Gastrocnemius medialis (tissue), 4 donors: ENCODE measurements at regions of chr1 and their contacts with region 1.

Region 1: GRCh38 chr1:47725992-47726855 is 271.0 kb downstream of the TRABD2B start:
- DNase-seq: peak; percentile 34 to 58
- ATAC-seq: peak; percentile 93 to 94
- H3K4me3 ChIP-seq: peak overlapping the region in 2 of 4 donors; percentile 8 to 11
- H3K27ac ChIP-seq: no peak overlapping the region
- H3K4me1 ChIP-seq: peaks cover 0 to 7% of the 10 kb centered on the region in 2 donors
- H3K27me3 ChIP-seq: peaks cover 16 to 23% (median 20%) of the 10 kb centered on the region in 3 donors
- CTCF ChIP-seq: peak; percentile 64 to 88 (median 76)
- POLR2A ChIP-seq: no peak

Region 2: GRCh38 chr1:47388891-47389238 is 337.4 kb before region 1 on chr1:
- in situ Hi-C with region 1: no loop called
- intact Hi-C with region 1: loop called (anchors 5 kb)
- DNase-seq: peak; percentile 5 to 29
- ATAC-seq: peak; percentile 27 to 64
- H3K4me3 ChIP-seq: no peak overlapping the region
- H3K27ac ChIP-seq: no peak overlapping the region
- H3K4me1 ChIP-seq: peaks cover 0 to 4% of the 10 kb centered on the region in 2 donors
- H3K27me3 ChIP-seq: peaks cover 0 to 14% (median 9%) of the 10 kb centered on the region in 3 donors
- CTCF ChIP-seq: peak in 3 of 5 experiments; percentile 50 to 67 (median 60)
- POLR2A ChIP-seq: no peak

Region 3: DNA sequence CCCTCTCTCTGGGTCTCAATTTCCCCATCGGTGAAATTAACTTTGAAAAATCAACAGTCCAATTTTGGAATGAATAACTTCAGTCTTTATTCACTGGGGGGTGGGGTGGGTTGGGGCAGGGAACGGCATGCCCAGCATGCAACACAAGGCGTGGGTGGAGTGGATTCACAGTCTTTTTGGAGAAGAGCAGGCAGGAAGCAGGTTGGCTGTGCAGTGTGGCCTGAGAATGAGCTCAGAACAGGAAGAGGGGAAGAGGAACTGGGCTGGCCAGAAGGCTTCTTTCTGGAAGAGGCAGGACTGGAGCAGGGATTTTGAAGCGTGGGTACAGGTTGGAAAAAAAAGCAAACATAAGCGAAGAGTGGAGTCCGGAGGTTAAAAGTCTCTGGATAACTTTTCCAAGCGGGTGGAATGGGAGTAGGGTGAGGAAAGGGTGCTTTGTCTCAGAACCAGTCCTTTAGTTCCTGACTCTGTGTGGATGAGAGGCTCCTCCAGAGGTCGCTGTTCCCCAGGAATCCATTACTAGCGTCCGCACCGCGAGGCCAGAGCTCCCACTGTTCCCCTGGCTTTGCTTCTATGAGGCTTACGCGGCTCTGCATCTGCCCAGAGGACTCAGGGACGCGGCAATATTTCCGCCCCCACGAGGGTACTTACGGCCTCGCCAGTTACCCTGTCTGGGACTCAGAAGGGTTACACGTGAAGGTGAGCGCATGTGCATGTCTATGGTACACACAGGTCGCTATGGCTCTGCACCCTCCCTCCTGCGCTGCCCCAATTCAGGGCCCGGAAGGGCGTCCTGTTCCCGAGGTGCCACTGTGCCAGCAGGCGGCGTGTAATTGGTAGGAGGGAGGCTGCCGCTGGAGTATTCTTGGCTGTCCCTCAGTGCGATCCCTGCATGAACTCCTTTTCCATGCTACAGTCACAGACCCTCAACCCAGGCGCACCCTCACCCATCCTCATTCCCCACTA is 293.9 kb before region 1 on chr1:
- in situ Hi-C with region 1: loop called in 1 of 4 experiments (anchors 25 kb)
- intact Hi-C with region 1: loop called (anchors 5 kb)
- DNase-seq: peak in 1 of 2 donors; percentile 45
- ATAC-seq: peak; percentile 42 to 63
- H3K4me3 ChIP-seq: no peak overlapping the region
- H3K27ac ChIP-seq: no peak overlapping the region
- H3K4me1 ChIP-seq: peaks cover 8 to 17% of the 10 kb centered on the region in 2 donors
- H3K27me3 ChIP-seq: peaks cover 63 to 77% (median 71%) of the 10 kb centered on the region in 3 donors
- CTCF ChIP-seq: peak in 4 of 5 experiments; percentile 22 to 48 (median 44)
- POLR2A ChIP-seq: no peak

Region 4: DNA sequence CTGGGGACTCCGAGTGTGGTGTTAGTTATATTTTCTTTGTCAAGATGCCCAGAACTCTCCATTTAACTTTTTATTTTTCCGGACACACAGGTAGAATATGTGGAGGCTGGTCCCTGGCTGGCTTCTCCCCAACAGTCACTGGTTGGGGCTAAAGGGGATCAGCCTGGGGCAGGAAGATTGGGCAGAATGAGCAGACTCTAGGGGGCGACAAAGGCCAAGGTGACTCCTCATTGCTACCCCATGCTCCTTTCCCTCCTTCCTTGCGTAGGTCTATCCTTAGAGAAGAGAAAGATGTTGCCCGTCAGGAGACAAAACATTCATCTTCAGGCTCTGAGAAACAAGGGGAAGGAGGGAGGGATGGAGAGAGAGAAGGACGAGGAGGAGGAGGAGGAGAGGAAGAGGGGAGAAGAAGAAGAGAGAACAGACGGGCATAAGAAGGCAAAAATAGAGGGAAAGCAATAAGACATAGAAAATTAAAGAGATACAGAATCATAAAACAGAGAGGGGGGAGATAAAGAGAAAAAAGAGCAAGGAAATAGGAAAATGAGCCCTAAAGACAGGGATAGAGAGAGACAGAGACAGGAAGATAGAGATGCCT is 198.5 kb before region 1 on chr1:
- in situ Hi-C with region 1: no loop called
- intact Hi-C with region 1: loop called (anchors 5 kb)
- DNase-seq: no peak
- ATAC-seq: peak; percentile 56 to 60
- H3K4me3 ChIP-seq: no peak overlapping the region
- H3K27ac ChIP-seq: no peak overlapping the region
- H3K4me1 ChIP-seq: peaks cover 0 to 2% of the 10 kb centered on the region in 2 donors
- H3K27me3 ChIP-seq: peaks cover 0 to 6% (median 5%) of the 10 kb centered on the region in 3 donors
- CTCF ChIP-seq: peak; percentile 26 to 56 (median 43)
- POLR2A ChIP-seq: no peak

Region 5: DNA sequence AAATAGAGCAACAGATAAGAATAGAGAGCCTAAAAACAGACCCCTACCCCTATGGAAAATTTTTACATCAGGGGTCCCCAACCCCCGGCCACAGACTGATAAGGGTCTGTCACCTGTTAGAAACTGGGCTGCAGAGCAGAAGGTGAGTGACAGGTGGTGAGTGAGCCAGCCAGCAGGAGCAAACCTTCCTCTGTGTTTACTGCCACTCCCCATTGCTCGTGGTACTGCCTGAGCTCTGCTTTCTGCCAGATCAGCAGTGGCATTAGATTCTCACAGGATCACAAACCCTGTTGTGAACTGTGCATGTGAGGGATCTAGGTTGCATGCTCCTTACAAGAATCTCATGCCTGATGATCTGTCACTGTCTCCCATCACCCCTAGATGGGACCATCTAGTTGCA is 114.2 kb before region 1 on chr1:
- in situ Hi-C with region 1: no loop called
- intact Hi-C with region 1: no loop called
- DNase-seq: no peak
- ATAC-seq: peak in 1 of 2 donors; percentile 54
- H3K4me3 ChIP-seq: no peak overlapping the region
- H3K27ac ChIP-seq: no peak overlapping the region
- H3K4me1 ChIP-seq: no peaks in the 10 kb centered on the region
- H3K27me3 ChIP-seq: no peaks in the 10 kb centered on the region
- CTCF ChIP-seq: no peak
- POLR2A ChIP-seq: no peak

Region 6: GRCh38 chr1:47675047-47675675 is 51.1 kb before region 1 on chr1:
- in situ Hi-C with region 1: no loop called
- intact Hi-C with region 1: no loop called
- DNase-seq: no peak
- ATAC-seq: no peak
- H3K4me3 ChIP-seq: no peak overlapping the region
- H3K27ac ChIP-seq: no peak overlapping the region
- H3K4me1 ChIP-seq: no peaks in the 10 kb centered on the region
- H3K27me3 ChIP-seq: no peaks in the 10 kb centered on the region
- CTCF ChIP-seq: no peak
- POLR2A ChIP-seq: no peak

Region 7: GRCh38 chr1:47881505-47882442 is 155.6 kb after region 1 on chr1:
- in situ Hi-C with region 1: no loop called
- intact Hi-C with region 1: no loop called
- DNase-seq: no peak
- ATAC-seq: no peak
- H3K4me3 ChIP-seq: no peak overlapping the region
- H3K27ac ChIP-seq: no peak overlapping the region
- H3K4me1 ChIP-seq: no peaks in the 10 kb centered on the region
- H3K27me3 ChIP-seq: no peaks in the 10 kb centered on the region
- CTCF ChIP-seq: no peak
- POLR2A ChIP-seq: no peak

Region 8: GRCh38 chr1:48061162-48062136 is 335.2 kb after region 1 on chr1:
- in situ Hi-C with region 1: loop called in 3 of 4 experiments (anchors 10 to 25 kb)
- intact Hi-C with region 1: no loop called
- DNase-seq: peak; percentile 32 to 62
- ATAC-seq: peak; percentile 91 to 92
- H3K4me3 ChIP-seq: no peak overlapping the region
- H3K27ac ChIP-seq: no peak overlapping the region
- H3K4me1 ChIP-seq: no peaks in the 10 kb centered on the region
- H3K27me3 ChIP-seq: no peaks in the 10 kb centered on the region
- CTCF ChIP-seq: peak; percentile 63 to 74 (median 66)
- POLR2A ChIP-seq: no peak

Region 9: GRCh38 chr1:48202030-48202752 is 476.0 kb after region 1 on chr1:
- in situ Hi-C with region 1: loop called in 2 of 4 experiments (anchors 25 kb)
- intact Hi-C with region 1: no loop called
- DNase-seq: peak; percentile 11 to 27
- ATAC-seq: peak; percentile 49 to 60
- H3K4me3 ChIP-seq: no peak overlapping the region
- H3K27ac ChIP-seq: no peak overlapping the region
- H3K4me1 ChIP-seq: no peaks in the 10 kb centered on the region
- H3K27me3 ChIP-seq: no peaks in the 10 kb centered on the region
- CTCF ChIP-seq: peak; percentile 38 to 78 (median 62)
- POLR2A ChIP-seq: no peak

Region 10: GRCh38 chr1:48498096-48498791 is 772.0 kb after region 1 on chr1:
- in situ Hi-C with region 1: no loop called
- intact Hi-C with region 1: no loop called
- DNase-seq: peak; percentile 53 to 59
- ATAC-seq: peak; percentile 73 to 91
- H3K4me3 ChIP-seq: no peak overlapping the region
- H3K27ac ChIP-seq: no peak overlapping the region
- H3K4me1 ChIP-seq: no peaks in the 10 kb centered on the region
- H3K27me3 ChIP-seq: no peaks in the 10 kb centered on the region
- CTCF ChIP-seq: peak; percentile 57 to 91 (median 77)
- POLR2A ChIP-seq: no peak